Heart left ventricle (tissue), 16 donors: ENCODE measurements at regions of chr5 and their contacts with region 1.

Region 1: DNA sequence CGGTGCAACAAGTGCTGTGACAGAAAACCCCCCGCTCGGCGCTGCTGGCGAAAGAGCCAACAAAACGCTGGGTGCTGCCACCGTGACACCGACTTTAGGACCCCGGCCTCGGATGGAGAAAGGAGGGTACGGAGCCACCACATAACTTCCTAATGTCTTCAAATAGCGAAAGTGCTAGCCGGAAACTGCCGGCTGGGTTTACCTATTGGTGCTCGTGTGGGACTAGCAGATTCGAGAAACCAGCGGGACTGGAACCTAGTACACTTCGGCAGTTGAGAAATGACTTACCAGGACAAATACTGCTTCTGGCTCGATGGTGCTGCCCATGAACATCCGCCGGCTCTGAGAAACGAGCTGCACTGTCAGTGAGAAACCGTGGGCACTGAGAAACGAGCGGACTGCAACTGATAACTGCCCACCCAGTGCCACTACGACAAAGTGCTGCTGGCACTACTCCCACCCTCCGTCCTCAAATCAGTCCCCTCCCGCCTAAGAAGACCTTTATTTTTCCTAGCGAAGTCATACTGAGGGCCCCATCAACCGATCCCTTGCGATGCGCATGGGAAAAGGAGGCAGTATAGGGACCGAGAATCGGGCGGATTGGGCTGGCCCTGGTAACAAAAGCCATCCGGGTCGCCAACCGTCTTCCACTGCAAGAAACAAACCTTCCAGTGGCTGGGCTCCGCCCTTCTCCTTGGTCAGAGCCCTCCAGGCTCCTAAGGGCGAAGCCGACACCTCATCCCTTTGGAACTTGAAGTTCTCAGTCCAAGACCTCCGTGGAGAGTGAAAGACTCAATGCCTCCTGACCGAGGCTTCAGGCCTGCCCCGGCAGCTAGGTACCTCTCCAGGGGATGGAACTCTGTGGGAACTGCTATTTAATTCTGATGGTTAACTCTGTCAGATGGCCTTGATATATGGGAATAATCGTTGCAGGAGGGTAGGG is 27.0 kb upstream of the ANXA2R start:
- DNase-seq: peak; percentile 86 to 91 (median 90)
- ATAC-seq: peak; percentile 66 to 79 (median 76)
- H3K4me3 ChIP-seq: peak overlapping the region; percentile 42 to 95 (median 82)
- H3K27ac ChIP-seq: peak overlapping the region; percentile 90 to 100 (median 99)
- H3K4me1 ChIP-seq: peaks cover 5 to 45% (median 23%) of the 10 kb centered on the region in 12 donors
- H3K27me3 ChIP-seq: no peaks in the 10 kb centered on the region
- CTCF ChIP-seq: no peak
- POLR2A ChIP-seq: no peak

Region 2: DNA sequence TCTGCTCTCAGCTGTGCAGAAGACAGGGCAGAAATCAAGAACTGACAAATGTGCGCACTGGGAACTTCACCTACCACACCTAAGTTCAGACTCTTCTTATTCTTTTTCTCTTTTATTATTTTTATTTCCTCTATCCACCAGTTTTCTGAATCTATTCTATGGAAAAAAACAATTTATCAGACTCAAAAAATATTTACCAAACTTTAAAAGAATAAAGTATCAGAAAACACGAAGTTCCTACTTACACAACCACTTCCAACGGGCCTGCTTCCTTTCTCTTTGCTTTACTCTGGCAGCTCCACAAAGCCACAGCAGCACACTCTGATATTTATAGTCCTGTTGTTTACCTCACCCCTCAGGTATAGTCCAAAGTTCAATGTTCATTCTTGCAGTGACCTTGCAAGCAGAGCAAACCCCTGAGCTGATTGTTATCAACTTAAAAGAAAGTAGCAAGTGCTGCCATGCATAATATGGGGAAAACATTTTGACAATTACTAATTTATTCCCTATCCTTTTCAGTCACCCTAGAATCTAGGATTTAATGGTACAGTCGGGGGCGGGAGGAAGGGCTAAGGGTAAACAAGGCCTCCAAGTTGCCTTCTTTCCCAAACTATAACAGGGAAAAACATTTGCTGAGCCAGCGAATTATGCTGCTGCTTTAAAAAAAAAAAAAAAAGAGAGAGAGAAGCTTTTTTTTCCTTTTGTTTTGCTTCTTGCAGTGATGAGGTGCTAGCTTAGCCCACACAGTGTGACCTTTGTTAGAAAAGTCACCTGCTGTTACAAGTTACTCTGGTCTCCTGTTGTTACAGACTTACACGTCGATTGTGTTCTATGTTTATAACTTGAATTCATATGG is 255.3 kb before region 1 on chr5 and contains the start of gene SELENOP:
- intact Hi-C with region 1: loop called in 1 of 10 experiments (anchors 10 kb)
- DNase-seq: peak in 4 of 5 donors; percentile 49 to 79 (median 66)
- ATAC-seq: peak; percentile 95 to 96 (median 96)
- H3K4me3 ChIP-seq: peak within 1 kb of the TSS; percentile 18 to 70 (median 58)
- H3K27ac ChIP-seq: peak within 1 kb of the TSS; percentile 69 to 94 (median 87)
- H3K4me1 ChIP-seq: peaks cover 0 to 40% (median 24%) of the 10 kb centered on the region in 12 donors
- H3K27me3 ChIP-seq: no peaks in the 10 kb centered on the region
- CTCF ChIP-seq: no peak
- POLR2A ChIP-seq: peak; percentile 30 to 90
- total RNA-seq, gene SELENOP: 167 to 547 (median 255) TPM

Region 3: GRCh38 chr5:42940853-42941252 is 126.2 kb before region 1 on chr5:
- intact Hi-C with region 1: no loop called
- DNase-seq: no peak
- ATAC-seq: no peak
- H3K4me3 ChIP-seq: no peak overlapping the region
- H3K27ac ChIP-seq: no peak overlapping the region
- H3K4me1 ChIP-seq: peaks cover 0 to 13% (median 6%) of the 10 kb centered on the region in 12 donors
- H3K27me3 ChIP-seq: peaks cover 4 to 69% (median 31%) of the 10 kb centered on the region in 9 donors
- CTCF ChIP-seq: no peak
- POLR2A ChIP-seq: no peak

Region 4: DNA sequence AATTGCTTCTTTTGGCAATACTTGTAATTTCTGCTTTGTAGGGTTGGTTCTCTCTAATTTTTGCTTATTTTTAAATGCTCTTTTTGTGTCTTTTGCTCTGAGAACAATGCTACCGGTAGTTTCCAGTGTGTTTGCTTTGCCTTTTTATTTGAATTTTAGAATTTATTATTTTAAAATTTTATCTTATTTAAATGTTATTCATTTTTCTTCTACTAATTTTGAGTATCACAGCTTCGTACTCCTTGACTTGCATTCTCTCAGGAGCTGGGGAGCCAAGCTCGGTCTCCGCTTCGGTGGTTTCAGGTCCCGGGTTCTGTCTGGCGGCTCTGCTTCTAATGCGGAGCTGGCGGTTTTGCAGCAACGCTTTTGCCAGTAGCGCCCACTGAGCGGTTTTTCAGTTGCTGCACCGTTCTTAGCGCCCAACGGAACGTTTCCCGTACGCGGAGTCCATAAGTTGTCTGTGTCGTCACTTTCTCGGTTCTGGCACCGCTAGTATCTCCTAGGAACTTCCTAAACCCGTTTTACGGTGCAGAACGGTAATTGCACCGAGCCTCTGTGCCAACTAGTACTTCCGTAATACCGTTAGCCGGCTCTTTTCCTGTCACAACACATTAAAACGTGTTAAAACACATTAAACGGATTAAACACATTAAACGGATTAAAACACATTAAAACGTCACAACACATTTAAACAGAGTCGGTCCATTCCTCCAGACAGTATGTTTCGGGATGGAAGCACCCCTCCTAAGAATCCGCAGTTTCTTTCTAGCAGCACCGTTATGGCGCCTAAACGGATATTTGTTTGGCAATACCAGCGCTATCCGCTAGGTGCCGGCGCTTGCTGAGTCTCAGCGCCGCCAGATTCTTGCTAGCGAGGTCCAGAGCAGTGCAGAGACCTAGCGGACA is 72.6 kb before region 1 on chr5:
- intact Hi-C with region 1: loop called in 6 of 10 experiments (anchors 1 to 2 kb)
- DNase-seq: peak; percentile 88 to 92 (median 89)
- ATAC-seq: peak; percentile 62 to 85 (median 78)
- H3K4me3 ChIP-seq: peak overlapping the region; percentile 6 to 77 (median 68)
- H3K27ac ChIP-seq: peak overlapping the region; percentile 86 to 99 (median 96)
- H3K4me1 ChIP-seq: peaks cover 0 to 31% (median 13%) of the 10 kb centered on the region in 12 donors
- H3K27me3 ChIP-seq: peaks cover 14 to 97% (median 63%) of the 10 kb centered on the region in 9 donors
- CTCF ChIP-seq: peak; percentile 71 to 90 (median 84)
- POLR2A ChIP-seq: no peak

Region 5: GRCh38 chr5:43019614-43020293 is 47.3 kb before region 1 on chr5:
- intact Hi-C with region 1: loop called in 1 of 10 experiments (anchors 2 kb)
- DNase-seq: peak in 4 of 5 donors; percentile 64 to 74 (median 70)
- ATAC-seq: peak in 3 of 4 donors; percentile 45 to 51 (median 51)
- H3K4me3 ChIP-seq: peak overlapping the region; percentile 42 to 73 (median 63)
- H3K27ac ChIP-seq: peak overlapping the region; percentile 75 to 99 (median 94)
- H3K4me1 ChIP-seq: peaks cover 0 to 44% (median 9%) of the 10 kb centered on the region in 12 donors
- H3K27me3 ChIP-seq: peaks cover 0 to 94% (median 23%) of the 10 kb centered on the region in 9 donors
- CTCF ChIP-seq: peak; percentile 11 to 55 (median 36)
- POLR2A ChIP-seq: no peak

Region 6: GRCh38 chr5:43105369-43106289 is 38.6 kb after region 1 on chr5:
- intact Hi-C with region 1: loop called in 5 of 10 experiments (anchors 5 kb)
- DNase-seq: peak; percentile 89 to 93 (median 90)
- ATAC-seq: peak; percentile 90 to 94 (median 90)
- H3K4me3 ChIP-seq: peak overlapping the region in 11 of 12 donors; percentile 21 to 62 (median 50)
- H3K27ac ChIP-seq: peak overlapping the region in 11 of 12 donors; percentile 35 to 77 (median 61)
- H3K4me1 ChIP-seq: peaks cover 0 to 16% (median 4%) of the 10 kb centered on the region in 12 donors
- H3K27me3 ChIP-seq: no peaks in the 10 kb centered on the region
- CTCF ChIP-seq: peak; percentile 98 to 100 (median 99)
- POLR2A ChIP-seq: peak in 1 of 2 donors; percentile 23

Region 7: DNA sequence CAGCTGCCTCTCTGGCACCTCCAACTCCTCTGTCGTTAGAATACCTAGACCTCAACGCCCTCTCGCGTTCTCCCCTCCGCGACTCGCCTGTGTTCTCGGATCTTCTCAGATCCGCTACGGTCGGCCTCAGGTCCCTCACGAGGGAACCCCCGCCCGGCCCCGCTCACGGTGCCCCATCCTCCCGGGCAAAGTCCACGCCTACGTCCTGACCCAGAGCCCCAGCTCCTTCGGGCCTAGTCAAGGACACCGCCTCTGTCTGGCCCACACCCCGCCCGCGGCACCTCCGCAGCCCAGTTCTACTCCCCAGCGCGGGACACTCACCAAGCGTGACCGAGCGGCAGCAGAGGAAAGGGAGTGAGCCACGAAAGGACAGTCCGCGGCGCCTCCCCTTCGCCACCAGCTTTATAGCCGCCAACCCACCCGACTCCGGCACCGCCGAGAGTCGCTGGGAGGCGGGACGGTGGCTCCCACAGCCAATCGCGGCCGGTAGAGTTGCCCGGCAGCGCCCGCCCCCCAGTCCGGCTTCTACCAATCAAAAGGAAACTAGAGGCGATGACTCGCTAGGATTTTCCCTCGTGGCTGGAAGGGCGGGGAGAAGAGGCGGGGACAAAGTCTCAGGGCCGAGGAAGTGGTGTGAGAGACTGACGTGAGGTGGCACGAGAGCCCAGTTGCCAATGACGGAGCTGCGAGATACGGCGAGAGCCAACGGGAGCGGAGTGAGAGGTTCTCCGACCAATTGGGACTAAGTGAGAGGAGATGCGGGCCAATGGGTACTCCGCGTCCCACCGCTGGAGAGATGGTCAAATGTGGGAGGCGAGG is 246.2 kb after region 1 on chr5 and contains the start of gene HMGCS1:
- intact Hi-C with region 1: loop called in 1 of 10 experiments (anchors 10 kb)
- DNase-seq: peak; percentile 98 to 99 (median 99)
- ATAC-seq: peak; percentile 98 to 99 (median 98)
- H3K4me3 ChIP-seq: peak within 1 kb of the TSS; percentile 67 to 97 (median 84)
- H3K27ac ChIP-seq: peak within 1 kb of the TSS; percentile 65 to 95 (median 87)
- H3K4me1 ChIP-seq: peaks cover 0 to 41% (median 25%) of the 10 kb centered on the region in 12 donors
- H3K27me3 ChIP-seq: no peaks in the 10 kb centered on the region
- CTCF ChIP-seq: peak in 2 of 12 donors; percentile 11 to 23
- POLR2A ChIP-seq: peak; percentile 93 to 96
- total RNA-seq, gene HMGCS1: 7.9 to 34.8 (median 30.0) TPM